ENCODE measurements at regions of chr6 and their contacts with region 1.

Region 1: DNA sequence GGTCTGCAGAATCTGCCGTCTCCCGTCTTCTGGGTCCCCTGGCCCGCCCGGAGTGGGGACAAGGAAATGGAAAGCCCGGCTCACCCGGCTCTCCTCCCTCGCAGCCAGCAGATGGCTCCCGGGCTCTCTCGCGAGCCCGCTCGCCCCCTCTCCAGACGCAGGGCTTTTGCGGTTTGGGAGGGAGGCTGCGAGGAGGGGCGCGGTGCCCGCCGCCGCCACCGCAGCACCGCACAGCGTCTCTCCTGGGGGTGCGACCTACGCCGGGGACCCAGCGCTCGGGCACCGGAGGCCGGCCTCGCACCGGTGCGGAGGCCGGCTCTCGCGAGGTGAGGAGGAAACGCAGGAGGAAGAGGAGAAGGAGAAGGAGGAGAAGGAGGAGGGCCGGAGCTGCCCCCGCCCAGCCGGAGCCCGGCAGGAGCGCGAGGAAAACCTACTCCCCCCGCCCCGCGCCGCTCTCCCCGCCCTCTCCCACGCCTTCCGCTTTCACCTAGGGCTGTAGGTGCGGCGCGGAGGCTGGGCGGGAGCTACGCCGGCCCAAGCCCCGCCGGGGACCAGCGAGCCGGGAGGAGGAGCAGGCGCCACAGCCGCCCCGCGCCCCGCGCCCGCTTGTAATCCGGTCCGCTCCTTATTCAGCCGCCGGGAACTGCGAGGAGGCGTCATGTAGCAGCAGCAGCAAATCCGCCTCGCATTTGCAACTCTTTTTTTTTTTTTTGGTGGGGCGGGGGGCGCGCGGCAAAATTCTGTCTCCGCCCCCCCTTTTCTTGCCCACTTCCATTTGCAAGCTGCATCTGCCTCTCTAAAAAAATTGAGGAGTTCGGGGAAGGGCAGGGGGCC is at the start of gene CARMIL1:
- DNase-seq: peak; percentile 79
- ATAC-seq: peak; percentile 91 to 93
- H3K4me3 ChIP-seq: peak within 1 kb of the TSS; percentile 99
- H3K27ac ChIP-seq: peak within 1 kb of the TSS; percentile 95 to 96
- H3K4me1 ChIP-seq: peaks cover 28% of the 10 kb centered on the region
- CTCF ChIP-seq: peak; percentile 76
- EP300 ChIP-seq: no peak
- POLR2A ChIP-seq: peak; percentile 33
- RAD21 ChIP-seq: peak; percentile 64 to 84
- polyA plus RNA-seq, gene CARMIL1: 11.8 and 16.1 TPM in 2 replicates

Region 2: GRCh38 chr6:25266456-25267100 is 12.6 kb before region 1 on chr6:
- CTCF ChIA-PET with region 1: interaction called, 21 read pairs
- POLR2A ChIA-PET with region 1: interaction called, 4 read pairs
- DNase-seq: no peak
- ATAC-seq: no peak
- H3K4me3 ChIP-seq: no peak overlapping the region
- H3K27ac ChIP-seq: no peak overlapping the region
- H3K4me1 ChIP-seq: peaks cover 9% of the 10 kb centered on the region; the same call in 1 of the 3 replicates
- CTCF ChIP-seq: no peak
- EP300 ChIP-seq: no peak
- POLR2A ChIP-seq: no peak
- RAD21 ChIP-seq: no peak

Region 3: DNA sequence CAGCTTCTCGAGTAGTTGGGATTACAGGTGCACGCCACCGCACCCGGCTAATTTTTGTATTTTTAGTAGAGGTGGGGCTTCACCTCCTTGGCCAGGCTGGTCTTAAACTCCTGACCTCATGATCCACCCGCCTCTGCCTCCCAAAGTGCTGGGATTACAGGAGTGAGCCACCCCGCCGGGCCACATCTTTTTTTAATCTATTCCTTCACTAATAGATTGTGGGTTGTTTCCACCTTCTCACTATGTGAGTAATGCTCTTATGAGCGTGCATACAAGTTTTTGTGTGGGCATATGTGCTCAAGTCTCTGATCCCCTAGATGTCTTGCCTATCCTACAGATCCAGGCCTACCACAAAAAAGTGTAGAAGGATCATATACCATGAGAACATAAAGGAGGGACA is 30.8 kb after region 1 on chr6:
- CTCF ChIA-PET with region 1: interaction called, 21 read pairs
- POLR2A ChIA-PET with region 1: interaction called, 7 read pairs
- DNase-seq: no peak
- ATAC-seq: no peak
- H3K4me3 ChIP-seq: no peak overlapping the region
- H3K27ac ChIP-seq: peak overlapping the region in 1 of 2 experiments; percentile 80; a peak in 3 of 6 replicates
- H3K4me1 ChIP-seq: peaks cover 43% of the 10 kb centered on the region
- CTCF ChIP-seq: no peak
- EP300 ChIP-seq: no peak
- POLR2A ChIP-seq: no peak
- RAD21 ChIP-seq: no peak

Region 4: GRCh38 chr6:25490018-25490801 is 211.1 kb after region 1 on chr6:
- CTCF ChIA-PET with region 1: interaction called, 36 read pairs
- POLR2A ChIA-PET with region 1: interaction called, 6 read pairs
- DNase-seq: peak; percentile 31 to 74
- ATAC-seq: peak; percentile 95 to 96
- H3K4me3 ChIP-seq: no peak overlapping the region
- H3K27ac ChIP-seq: peak overlapping the region in 1 of 2 experiments; percentile 66; a peak in 2 of 6 replicates
- H3K4me1 ChIP-seq: peaks cover 3% of the 10 kb centered on the region; the same call in 1 of the 3 replicates
- CTCF ChIP-seq: peak; percentile 74
- EP300 ChIP-seq: no peak
- POLR2A ChIP-seq: no peak
- RAD21 ChIP-seq: peak; percentile 81 to 82

Region 5: GRCh38 chr6:25556516-25556915 is 277.4 kb after region 1 on chr6:
- CTCF ChIA-PET with region 1: interaction called, 11 read pairs
- POLR2A ChIA-PET with region 1: no interaction called
- DNase-seq: peak; percentile 15 to 71
- ATAC-seq: peak; percentile 71 to 82; a peak in 4 of 6 replicates
- H3K4me3 ChIP-seq: no peak overlapping the region
- H3K27ac ChIP-seq: no peak overlapping the region
- H3K4me1 ChIP-seq: no peaks in the 10 kb centered on the region
- CTCF ChIP-seq: peak; percentile 74
- EP300 ChIP-seq: no peak
- POLR2A ChIP-seq: no peak
- RAD21 ChIP-seq: peak; percentile 53 to 59